ENCODE measurements at regions of chr2 and their contacts with region 1.

Region 1: DNA sequence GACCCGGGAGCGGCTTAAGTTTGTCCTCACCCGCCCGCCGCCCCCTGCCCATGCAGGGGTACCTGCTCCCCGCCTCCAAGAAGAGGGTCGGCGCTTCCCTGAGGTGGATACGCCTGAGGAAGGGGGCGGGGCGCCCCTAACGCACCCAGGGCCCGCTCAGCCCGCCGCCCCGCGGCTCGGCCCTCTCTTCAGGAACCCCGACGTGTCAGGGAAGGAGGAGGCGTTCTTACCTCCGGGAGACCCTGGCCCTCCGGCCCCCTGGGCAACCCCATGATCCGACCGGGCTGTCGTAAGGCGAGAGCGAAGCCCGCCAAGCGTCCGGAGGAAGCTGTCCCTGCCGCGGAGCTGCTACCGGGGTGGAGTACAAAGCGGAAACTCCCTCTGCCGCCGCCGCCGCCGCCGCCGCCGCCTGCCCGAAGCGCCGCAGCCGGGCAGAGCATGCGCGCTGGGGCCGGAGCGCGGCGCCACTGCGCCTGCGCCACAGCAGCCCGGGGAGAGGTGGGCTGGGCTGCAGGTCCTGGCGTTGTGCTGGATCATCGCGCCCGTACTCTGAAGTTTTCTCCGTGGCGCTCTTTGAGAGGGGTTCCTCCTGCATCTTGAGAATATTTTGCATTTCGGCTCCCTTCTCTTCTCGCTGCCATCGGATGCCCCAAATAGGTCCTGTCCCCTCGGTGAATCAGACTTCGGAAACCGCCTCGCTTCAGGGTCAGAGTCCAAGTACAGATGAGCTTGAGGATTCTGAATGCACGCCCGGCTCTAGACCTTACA is at the start of gene CCDC93:
- DNase-seq: peak; percentile 90
- H3K4me3 Mint-ChIP-seq: peak within 1 kb of the TSS; percentile 90
- H3K27ac Mint-ChIP-seq: no peak within 1 kb of the TSS
- H3K4me1 Mint-ChIP-seq: peaks cover 43% of the 10 kb centered on the region
- H3K27me3 Mint-ChIP-seq: no peaks in the 10 kb centered on the region
- CTCF ChIP-seq: no peak
- total RNA-seq, gene CCDC93: 49.8 and 57.3 TPM in 2 replicates

Region 2: GRCh38 chr2:118003396-118003824 is 10.5 kb before region 1 on chr2:
- CTCF ChIA-PET with region 1: interaction called, 13 read pairs
- intact Hi-C with region 1: no loop called
- DNase-seq: peak; percentile 56
- H3K4me3 Mint-ChIP-seq: no peak overlapping the region
- H3K27ac Mint-ChIP-seq: no peak overlapping the region
- H3K4me1 Mint-ChIP-seq: no peaks in the 10 kb centered on the region
- H3K27me3 Mint-ChIP-seq: no peaks in the 10 kb centered on the region
- CTCF ChIP-seq: peak; percentile 60

Region 3: GRCh38 chr2:118265873-118266455 is 252.1 kb after region 1 on chr2:
- CTCF ChIA-PET with region 1: no interaction called
- intact Hi-C with region 1: no loop called
- DNase-seq: no peak
- H3K4me3 Mint-ChIP-seq: no peak overlapping the region
- H3K27ac Mint-ChIP-seq: no peak overlapping the region
- H3K4me1 Mint-ChIP-seq: no peaks in the 10 kb centered on the region
- H3K27me3 Mint-ChIP-seq: no peaks in the 10 kb centered on the region
- CTCF ChIP-seq: no peak